Stomach (tissue), 19 donors: ENCODE measurements at regions of chr7 and their contacts with region 1.

Region 1: DNA sequence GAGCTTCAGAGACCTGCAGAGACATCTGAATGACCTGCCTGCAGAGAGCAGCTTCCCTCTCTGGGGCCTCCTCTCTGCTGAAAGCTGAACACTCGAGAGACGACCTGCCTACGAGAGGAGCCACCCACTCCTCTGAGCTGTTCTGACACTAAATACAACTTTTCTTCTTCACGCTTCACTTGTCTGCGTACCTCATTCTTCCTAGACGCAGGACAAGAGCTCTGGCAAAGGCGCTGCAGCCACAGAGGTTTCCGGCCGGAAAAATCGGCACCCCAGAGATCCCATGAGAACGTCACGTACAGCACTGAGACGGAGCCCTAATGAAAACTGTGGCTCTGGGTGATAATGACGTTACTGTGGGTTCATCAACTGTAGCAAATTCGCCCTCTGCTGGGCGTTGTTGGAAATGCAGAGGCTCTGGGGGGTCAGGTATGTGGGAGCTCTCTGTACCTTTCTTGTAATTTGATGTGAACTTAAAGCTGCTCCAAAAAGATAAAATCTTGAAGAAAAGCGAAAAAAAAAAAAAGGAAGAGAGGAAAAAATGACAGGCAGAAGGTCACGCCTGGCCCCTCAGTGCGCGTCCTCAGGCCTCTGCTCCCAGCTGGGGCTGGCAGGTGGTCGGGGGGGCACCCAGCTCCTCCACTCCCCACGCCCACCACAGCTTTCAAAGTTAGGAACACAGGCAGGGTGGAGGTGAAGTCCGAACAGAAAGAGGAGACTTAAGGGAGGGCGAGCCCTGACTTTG is 120.7 kb downstream of the DYNC2I1 start:
- DNase-seq: peak; percentile 85 to 92
- H3K4me3 ChIP-seq: peak overlapping the region; percentile 25 to 36 (median 32)
- H3K27ac ChIP-seq: peak overlapping the region in 4 of 5 donors; percentile 7 to 62 (median 54)
- H3K4me1 ChIP-seq: peaks cover 8 to 31% (median 16%) of the 10 kb centered on the region in 4 donors
- H3K27me3 ChIP-seq: no peaks in the 10 kb centered on the region
- CTCF ChIP-seq: peak in 5 of 7 experiments; percentile 81 to 98 (median 94)
- EP300 ChIP-seq: peak; percentile 4
- POLR2A ChIP-seq: no peak

Region 2: DNA sequence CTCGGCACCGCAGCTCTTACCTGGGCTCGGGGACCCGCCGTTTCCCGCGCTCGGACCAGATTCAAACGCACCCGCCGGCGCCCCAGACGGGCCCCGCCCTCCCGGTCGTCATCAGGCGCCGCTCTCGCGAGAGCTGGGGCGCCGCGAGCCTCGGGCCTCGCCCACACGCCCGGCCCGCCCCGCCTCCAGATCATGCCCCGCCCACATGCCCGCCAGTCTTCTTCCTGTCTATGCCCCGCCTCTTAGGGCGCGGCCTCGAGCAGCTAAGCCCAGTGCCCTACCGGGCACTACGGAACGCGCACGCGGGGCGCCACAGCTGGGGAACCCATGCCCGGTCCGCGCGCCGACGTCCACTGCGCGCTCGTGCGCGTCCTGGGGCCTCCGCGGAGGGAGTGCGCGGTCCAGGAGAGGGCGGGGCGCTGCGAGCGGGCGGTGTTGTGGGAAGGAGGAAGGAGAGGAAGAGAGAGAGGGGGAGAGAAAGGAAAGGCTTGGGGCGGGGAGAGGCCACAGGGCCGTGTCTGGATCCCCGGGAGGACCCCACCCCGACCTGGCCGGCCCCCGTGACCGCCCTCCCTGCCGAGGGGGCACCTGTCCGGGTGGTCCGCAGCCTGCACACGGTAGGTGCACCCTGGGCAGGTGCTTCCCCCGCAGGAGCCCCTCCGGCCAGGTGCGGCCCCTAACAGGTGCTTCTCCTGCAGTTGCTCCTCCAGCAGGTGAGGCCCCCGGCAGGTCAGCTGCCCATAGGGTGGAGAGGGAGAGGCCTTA is 272.1 kb before region 1 on chr7 and contains the start of gene NCAPG2:
- intact Hi-C with region 1: loop called (anchors 5 kb)
- DNase-seq: peak; percentile 99
- H3K4me3 ChIP-seq: peak within 1 kb of the TSS; percentile 76 to 82 (median 80)
- H3K27ac ChIP-seq: peak within 1 kb of the TSS; percentile 92 to 97 (median 95)
- H3K4me1 ChIP-seq: peaks cover 7 to 28% (median 21%) of the 10 kb centered on the region in 4 donors
- H3K27me3 ChIP-seq: no peaks in the 10 kb centered on the region
- CTCF ChIP-seq: peak in 5 of 7 experiments; percentile 22 to 63 (median 52)
- EP300 ChIP-seq: no peak
- POLR2A ChIP-seq: peak in 1 of 4 donors; percentile 44
- total RNA-seq, gene NCAPG2: 4.9 to 24.2 (median 21.6) TPM

Region 3: DNA sequence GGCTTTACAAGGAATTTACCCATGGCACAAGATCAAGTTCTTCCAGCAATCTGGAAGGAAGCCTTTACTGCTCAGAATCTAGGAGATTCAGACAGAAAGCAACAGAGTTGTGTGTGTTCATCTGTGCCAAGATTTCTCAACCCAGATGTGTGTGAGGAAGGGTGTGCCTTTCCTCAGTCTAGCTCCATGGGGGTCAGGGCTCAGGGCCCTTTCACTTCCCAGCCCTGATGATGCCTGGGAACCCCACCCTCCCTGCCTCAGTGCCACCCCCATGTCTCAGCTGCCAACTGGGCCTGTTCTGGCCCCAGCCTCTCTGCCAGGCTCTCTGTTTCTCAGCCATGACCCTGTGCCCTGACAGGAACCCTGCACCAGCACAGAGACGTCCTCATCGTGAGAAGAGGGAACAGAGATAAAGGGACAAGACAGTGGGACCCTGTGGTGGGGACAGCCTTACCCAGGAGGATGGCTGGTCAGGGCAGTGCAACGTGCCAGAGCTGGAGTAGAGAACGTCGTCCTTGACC is 65.6 kb after region 1 on chr7:
- intact Hi-C with region 1: no loop called
- DNase-seq: peak in 1 of 2 donors; percentile 22
- H3K4me3 ChIP-seq: no peak overlapping the region
- H3K27ac ChIP-seq: peak overlapping the region in 2 of 5 donors; percentile 40 to 52
- H3K4me1 ChIP-seq: peaks cover 0 to 41% (median 6%) of the 10 kb centered on the region in 4 donors
- H3K27me3 ChIP-seq: no peaks in the 10 kb centered on the region
- CTCF ChIP-seq: no peak
- EP300 ChIP-seq: no peak
- POLR2A ChIP-seq: no peak

Region 4: GRCh38 chr7:159075563-159076238 is 98.7 kb after region 1 on chr7:
- intact Hi-C with region 1: no loop called
- DNase-seq: no peak
- H3K4me3 ChIP-seq: no peak overlapping the region
- H3K27ac ChIP-seq: peak overlapping the region in 3 of 5 donors; percentile 20 to 33 (median 29)
- H3K4me1 ChIP-seq: peaks cover 0 to 11% (median 3%) of the 10 kb centered on the region in 4 donors
- H3K27me3 ChIP-seq: no peaks in the 10 kb centered on the region
- CTCF ChIP-seq: no peak
- EP300 ChIP-seq: no peak
- POLR2A ChIP-seq: no peak